Right ventricle myocardium inferior (tissue), 1 donor: ENCODE measurements at regions of chr22 and their contacts with region 1.

Region 1: DNA sequence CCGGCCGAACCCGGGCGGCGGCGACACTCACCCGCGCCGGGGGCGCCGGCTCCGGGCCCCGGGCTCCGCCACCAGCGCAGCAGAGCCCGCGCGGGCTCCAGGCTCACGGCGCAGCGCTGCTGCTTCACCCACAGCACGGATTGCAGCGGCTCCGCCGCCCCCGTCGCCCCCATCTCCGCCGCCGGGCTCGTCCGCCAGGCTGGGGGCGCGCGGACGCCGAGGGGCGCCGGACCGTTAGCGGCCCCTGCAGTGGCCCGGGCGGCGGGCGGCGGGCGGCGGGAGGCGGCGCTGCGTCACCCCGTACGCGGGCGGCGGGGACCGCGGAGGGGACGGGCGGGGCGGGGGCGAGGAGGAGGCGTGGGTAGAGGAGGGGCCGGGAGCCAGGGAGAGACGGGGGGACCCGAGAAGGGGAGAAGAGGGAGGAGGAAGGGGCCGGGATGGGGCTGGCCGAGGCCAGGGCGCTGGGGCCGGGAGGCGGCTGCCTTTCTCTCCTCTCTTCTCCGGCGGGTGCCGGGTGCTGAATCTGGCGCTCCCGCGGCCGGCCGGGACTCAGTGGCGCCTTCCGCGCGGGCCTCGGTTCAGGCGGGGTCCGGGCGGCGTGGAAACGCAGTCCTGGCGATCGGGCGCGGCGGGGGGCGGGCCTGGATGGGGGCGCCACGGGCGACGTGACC is at the start of gene CERK:
- DNase-seq: peak; percentile 87
- ATAC-seq: peak; percentile 82
- total RNA-seq, gene CERK: 71.6 TPM

Region 2: DNA sequence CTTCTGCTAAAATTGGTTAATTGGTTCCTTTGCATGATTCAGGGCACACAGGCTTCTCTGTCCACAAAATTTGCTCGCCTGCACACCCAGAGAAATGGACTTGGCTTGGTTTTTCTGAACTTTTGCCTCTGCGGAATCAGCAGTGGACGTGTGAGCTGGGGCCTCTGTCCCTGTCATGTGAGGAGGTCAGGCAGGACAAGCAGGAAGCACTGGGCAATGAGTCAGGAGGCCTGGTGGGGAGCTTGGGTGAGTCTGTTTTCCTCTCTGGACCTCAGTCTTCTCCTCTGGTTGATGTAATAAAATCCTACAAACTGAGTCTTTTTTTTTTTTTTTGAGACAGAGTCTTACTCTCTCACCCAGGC is 190.2 kb before region 1 on chr22:
- intact Hi-C with region 1: loop called (anchors 5 kb)
- DNase-seq: peak; percentile 81
- ATAC-seq: peak; percentile 70

Region 3: DNA sequence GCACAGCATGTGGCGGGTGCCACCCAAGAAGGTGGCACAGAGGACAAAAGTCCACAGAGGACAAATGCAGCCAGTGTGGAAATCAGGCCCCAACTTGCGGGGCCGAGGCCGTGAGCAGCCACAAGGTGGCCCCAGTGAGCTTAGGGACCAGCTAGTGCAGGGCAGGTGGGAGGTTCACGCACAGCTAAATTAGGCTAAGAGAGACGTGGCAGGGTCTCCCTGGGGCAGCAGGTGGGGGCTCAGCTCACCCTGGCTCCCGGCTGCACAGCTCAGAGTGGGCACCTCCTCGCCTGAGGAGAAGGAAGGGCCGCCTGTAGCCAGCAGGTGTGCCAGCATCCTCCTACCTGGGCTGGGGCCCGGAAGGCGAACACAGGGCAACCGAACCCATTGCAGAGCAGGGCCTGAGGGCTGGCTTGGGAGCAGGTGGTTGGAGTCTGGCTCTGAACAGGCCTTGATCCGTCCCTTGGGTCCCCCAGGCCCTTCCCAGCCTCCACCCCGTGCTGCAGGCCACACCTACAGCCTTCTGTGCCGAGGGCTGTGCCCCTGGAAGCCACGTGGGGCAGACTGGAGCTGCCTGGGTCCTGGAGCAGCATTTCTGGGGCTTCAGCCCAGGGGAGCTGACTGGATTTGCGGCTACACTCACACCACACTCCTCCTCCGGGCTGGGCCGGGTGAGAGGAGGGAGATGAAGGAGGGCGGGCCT is 174.6 kb before region 1 on chr22:
- intact Hi-C with region 1: loop called (anchors 5 kb)
- DNase-seq: peak; percentile 91
- ATAC-seq: peak; percentile 92

Region 4: GRCh38 chr22:46576556-46577367 is 161.3 kb before region 1 on chr22:
- intact Hi-C with region 1: loop called (anchors 5 kb)
- DNase-seq: peak; percentile 85
- ATAC-seq: peak; percentile 29

Region 5: DNA sequence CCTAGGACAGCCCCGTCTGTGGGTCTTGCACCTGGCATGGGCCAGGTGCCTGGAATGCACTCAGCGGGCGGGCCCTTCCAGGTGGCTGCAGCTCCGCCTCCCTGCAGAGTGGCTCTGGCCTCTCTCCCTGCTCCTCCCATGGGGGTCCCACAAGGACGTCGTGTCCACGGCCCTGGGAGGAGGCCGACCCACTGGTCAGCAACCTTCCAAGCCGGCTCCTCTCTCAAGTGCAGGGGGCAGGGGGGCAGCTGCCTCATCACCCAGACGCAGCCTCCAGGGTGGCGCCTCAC is 41.9 kb before region 1 on chr22:
- intact Hi-C with region 1: no loop called
- DNase-seq: no peak
- ATAC-seq: peak; percentile 12

Region 6: GRCh38 chr22:46714550-46714949 is 23.6 kb before region 1 on chr22:
- intact Hi-C with region 1: no loop called
- DNase-seq: no peak
- ATAC-seq: no peak

Region 7: DNA sequence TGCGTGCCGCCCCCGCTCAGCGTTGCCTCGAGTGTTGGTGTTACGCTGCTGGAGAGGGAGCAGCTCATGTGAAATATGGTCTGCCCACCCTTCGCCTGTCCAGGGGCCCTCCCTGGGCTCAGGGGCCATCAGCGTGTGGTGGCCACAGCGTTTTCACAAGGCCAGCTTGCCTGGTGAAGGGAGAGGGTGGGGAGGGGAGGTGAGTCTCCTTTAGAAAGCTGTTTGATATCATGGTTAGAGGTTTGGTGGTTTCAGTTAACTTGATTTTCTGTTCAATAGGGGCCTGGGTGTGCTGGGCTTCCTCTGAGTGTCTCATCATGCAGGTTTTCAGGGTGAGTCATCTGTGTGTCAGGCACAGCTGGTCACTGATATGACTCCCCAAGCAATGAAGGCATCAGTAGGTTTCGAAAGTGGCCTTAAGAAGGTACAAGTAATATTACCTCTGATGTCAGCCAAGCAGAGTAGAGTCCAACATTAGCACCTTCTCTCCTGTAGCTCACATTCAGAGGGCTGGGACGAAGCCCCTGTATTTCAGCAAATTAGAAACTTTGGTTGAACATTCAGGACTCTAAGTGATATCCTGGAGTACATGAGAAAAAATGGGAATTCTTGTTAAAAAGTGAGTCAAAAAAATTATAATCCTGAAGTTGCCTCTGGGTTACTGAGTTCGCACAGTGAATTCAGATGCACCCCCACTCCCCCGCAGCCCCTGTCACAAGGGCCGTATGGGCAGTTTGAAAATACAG is 196.8 kb after region 1 on chr22:
- intact Hi-C with region 1: no loop called
- DNase-seq: peak; percentile 3
- ATAC-seq: peak; percentile 29